ENCODE measurements at regions of chr4 and their contacts with region 1.

Region 1: DNA sequence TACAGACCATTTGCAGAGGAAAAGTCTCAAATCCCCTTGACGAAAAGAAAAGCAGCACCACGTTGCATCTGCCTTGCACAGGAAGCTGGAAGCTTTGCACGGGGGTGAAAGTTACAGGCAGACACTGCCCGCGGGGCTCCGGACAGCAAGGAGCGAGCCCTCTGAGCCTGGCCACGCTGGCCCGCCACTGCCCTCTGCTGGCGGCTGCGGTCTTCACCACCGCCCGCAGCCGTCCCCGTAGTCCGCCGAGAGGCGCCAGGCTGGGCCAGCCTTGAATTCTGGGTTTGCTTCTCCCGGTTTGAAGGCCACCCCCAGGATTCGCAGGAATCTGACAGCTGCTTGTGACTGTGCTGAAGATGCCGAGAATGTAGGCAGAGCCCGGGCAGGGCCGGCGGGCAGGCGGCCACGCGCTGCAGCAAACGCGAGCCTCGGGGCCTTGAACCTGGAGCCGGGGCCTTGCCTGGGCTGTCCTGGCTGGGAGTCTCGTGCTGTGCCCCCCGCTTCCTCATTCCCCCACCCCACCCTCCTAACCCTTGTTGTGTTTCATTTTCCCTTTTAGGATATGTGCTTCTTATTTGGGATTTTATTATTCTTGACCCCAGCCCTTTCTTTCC is 49.2 kb downstream of the ENPP6 start:
- DNase-seq: peak; percentile 41
- H3K4me3 ChIP-seq: no peak overlapping the region
- H3K27ac ChIP-seq: no peak overlapping the region
- H3K4me1 ChIP-seq: no peaks in the 10 kb centered on the region
- H3K27me3 ChIP-seq: no peaks in the 10 kb centered on the region
- CTCF ChIP-seq: peak; percentile 72 to 90 (median 90)
- POLR2A ChIP-seq: no peak

Region 2: GRCh38 chr4:183636923-183637322 is 531.6 kb before region 1 on chr4:
- intact Hi-C with region 1: no loop called
- DNase-seq: no peak
- H3K4me3 ChIP-seq: peak overlapping the region; percentile 10 to 25
- H3K27ac ChIP-seq: peak overlapping the region; percentile 67 to 72
- H3K4me1 ChIP-seq: no peaks in the 10 kb centered on the region
- H3K27me3 ChIP-seq: no peaks in the 10 kb centered on the region
- CTCF ChIP-seq: no peak
- POLR2A ChIP-seq: no peak

Region 3: GRCh38 chr4:183905081-183905592 is 263.4 kb before region 1 on chr4 and contains the start of gene STOX2:
- intact Hi-C with region 1: loop called (anchors 10 kb)
- DNase-seq: peak; percentile 73
- H3K4me3 ChIP-seq: peak within 1 kb of the TSS; percentile 41 to 49
- H3K27ac ChIP-seq: peak within 1 kb of the TSS; percentile 46 to 63
- H3K4me1 ChIP-seq: no peaks in the 10 kb centered on the region
- H3K27me3 ChIP-seq: no peaks in the 10 kb centered on the region
- CTCF ChIP-seq: no peak
- POLR2A ChIP-seq: peak; percentile 42
- total RNA-seq, gene STOX2: 12.9 to 14.9 TPM

Region 4: DNA sequence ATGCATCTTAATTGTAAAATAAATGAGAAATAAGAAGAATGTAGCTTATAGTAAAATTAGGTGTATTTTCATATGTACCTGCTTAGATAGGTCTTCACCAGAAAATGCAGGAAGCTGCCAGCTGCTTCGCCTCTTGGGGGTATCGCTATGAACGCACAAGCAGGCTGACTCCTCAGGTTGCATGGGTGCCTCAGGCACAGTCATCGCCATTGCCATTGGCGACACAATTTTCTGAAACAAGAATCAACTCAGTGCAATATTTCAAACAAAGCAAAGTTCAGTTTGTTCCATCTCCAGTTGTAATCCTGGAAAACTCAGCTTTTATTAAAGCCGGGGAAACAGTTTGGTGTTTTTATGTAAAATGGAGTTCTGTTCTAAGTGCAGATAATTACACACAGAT is 233.8 kb before region 1 on chr4:
- intact Hi-C with region 1: no loop called
- DNase-seq: no peak
- H3K4me3 ChIP-seq: no peak overlapping the region
- H3K27ac ChIP-seq: no peak overlapping the region
- H3K4me1 ChIP-seq: no peaks in the 10 kb centered on the region
- H3K27me3 ChIP-seq: no peaks in the 10 kb centered on the region
- CTCF ChIP-seq: no peak
- POLR2A ChIP-seq: no peak

Region 5: DNA sequence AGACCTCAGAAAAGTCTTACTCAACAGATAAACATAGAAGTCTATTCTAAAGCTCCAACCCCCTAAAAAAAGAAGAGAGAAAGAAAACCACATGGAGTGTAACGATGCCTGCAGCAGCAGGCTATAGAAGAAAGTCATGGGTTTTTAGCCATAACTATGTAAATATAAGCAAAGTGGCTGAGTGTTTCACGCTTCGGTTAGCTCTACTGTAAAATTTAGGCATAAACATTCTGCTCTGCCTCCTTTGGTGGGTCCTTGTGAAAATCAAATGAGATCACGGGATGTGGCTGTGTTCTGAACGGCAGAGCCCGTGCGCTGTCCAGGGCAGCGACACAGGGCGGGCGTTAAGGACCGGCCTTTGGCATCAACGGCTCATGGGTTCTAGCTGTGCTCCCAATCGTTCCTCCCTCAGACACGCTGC is 227.5 kb after region 1 on chr4:
- intact Hi-C with region 1: no loop called
- DNase-seq: no peak
- H3K4me3 ChIP-seq: no peak overlapping the region
- H3K27ac ChIP-seq: no peak overlapping the region
- H3K4me1 ChIP-seq: peaks cover 6% of the 10 kb centered on the region
- H3K27me3 ChIP-seq: no peaks in the 10 kb centered on the region
- CTCF ChIP-seq: no peak
- POLR2A ChIP-seq: no peak